ENCODE measurements at regions of chr5 and their contacts with region 1.

Region 1: DNA sequence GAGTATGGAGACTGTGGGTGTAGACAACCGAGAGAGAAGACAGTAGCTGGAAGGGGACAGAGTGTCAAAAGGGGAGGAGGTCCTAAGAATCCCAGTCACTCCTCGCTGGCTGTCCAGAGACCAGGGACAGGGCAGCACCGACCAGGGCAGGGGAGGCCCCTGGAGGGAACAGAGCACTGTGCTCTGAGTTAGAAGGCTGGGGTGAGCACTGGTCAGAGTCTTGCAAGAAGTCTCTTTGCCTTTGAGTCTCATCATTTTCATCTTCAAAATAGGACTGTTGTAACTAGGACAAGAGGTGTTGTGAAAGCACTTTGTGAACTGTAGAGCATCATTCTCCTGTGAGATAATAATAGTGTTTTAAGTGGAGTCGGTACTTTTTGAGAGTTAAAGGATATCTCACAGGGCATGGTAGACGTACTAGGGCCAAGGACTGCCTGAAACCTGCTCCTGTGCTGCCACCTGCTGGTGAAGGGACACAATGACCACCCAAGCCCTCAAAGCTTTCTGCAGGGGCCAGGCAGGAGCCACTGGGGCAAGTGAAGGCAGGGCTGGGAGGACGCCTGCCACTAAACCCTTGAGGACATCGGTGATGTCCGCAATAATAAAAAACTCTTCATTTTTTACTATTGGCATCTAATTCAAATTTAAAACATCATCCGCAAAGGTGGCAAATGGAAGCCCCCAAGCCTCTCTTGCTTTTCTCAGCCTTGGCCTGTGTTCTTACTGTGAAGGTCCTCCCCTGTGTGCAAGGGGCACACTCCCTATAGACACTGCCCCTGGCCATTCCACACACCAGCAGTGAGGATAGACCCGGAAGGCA is 28.2 kb downstream of the SLC6A7 start:
- DNase-seq: peak; percentile 68 to 91 (median 83)
- ATAC-seq: peak; percentile 97
- H3K4me3 ChIP-seq: no peak overlapping the region
- H3K4me3 Mint-ChIP-seq: no peak overlapping the region
- H3K27ac ChIP-seq: no peak overlapping the region
- H3K27ac Mint-ChIP-seq: no peak overlapping the region
- H3K4me1 ChIP-seq: no peaks in the 10 kb centered on the region
- H3K4me1 Mint-ChIP-seq: peaks cover 2% of the 10 kb centered on the region
- H3K27me3 ChIP-seq: no peaks in the 10 kb centered on the region
- H3K27me3 Mint-ChIP-seq: peaks cover 3% of the 10 kb centered on the region
- CTCF ChIP-seq: peak; percentile 82

Region 2: GRCh38 chr5:149834246-149834855 is 383.7 kb before region 1 on chr5:
- CTCF ChIA-PET with region 1: interaction called, 6 read pairs
- POLR2A ChIA-PET with region 1: no interaction called
- intact Hi-C with region 1: loop called in 1 of 2 experiments (anchors 2 kb)
- DNase-seq: peak in 8 of 9 experiments; percentile 20 to 75 (median 45)
- ATAC-seq: peak; percentile 62
- H3K4me3 ChIP-seq: no peak overlapping the region
- H3K4me3 Mint-ChIP-seq: no peak overlapping the region
- H3K27ac ChIP-seq: no peak overlapping the region
- H3K27ac Mint-ChIP-seq: no peak overlapping the region
- H3K4me1 ChIP-seq: no peaks in the 10 kb centered on the region
- H3K4me1 Mint-ChIP-seq: no peaks in the 10 kb centered on the region
- H3K27me3 ChIP-seq: no peaks in the 10 kb centered on the region
- H3K27me3 Mint-ChIP-seq: no peaks in the 10 kb centered on the region
- CTCF ChIP-seq: peak; percentile 52

Region 3: GRCh38 chr5:150161242-150162141 is 56.6 kb before region 1 on chr5:
- CTCF ChIA-PET with region 1: interaction called, 122 read pairs
- POLR2A ChIA-PET with region 1: no interaction called
- intact Hi-C with region 1: loop called in 1 of 2 experiments (anchors 1 kb)
- DNase-seq: peak; percentile 63 to 86 (median 71)
- ATAC-seq: peak; percentile 94
- H3K4me3 ChIP-seq: no peak overlapping the region
- H3K4me3 Mint-ChIP-seq: no peak overlapping the region
- H3K27ac ChIP-seq: no peak overlapping the region
- H3K27ac Mint-ChIP-seq: no peak overlapping the region
- H3K4me1 ChIP-seq: no peaks in the 10 kb centered on the region
- H3K4me1 Mint-ChIP-seq: no peaks in the 10 kb centered on the region
- H3K27me3 ChIP-seq: peaks cover 0 to 3% of the 10 kb centered on the region in 2 experiments
- H3K27me3 Mint-ChIP-seq: peaks cover 17% of the 10 kb centered on the region
- CTCF ChIP-seq: peak; percentile 85

Region 4: GRCh38 chr5:150234576-150235499 is 16.8 kb after region 1 on chr5:
- CTCF ChIA-PET with region 1: interaction called, 10 read pairs
- POLR2A ChIA-PET with region 1: no interaction called
- intact Hi-C with region 1: no loop called
- DNase-seq: no peak
- ATAC-seq: no peak
- H3K4me3 ChIP-seq: no peak overlapping the region
- H3K4me3 Mint-ChIP-seq: no peak overlapping the region
- H3K27ac ChIP-seq: no peak overlapping the region
- H3K27ac Mint-ChIP-seq: no peak overlapping the region
- H3K4me1 ChIP-seq: no peaks in the 10 kb centered on the region
- H3K4me1 Mint-ChIP-seq: no peaks in the 10 kb centered on the region
- H3K27me3 ChIP-seq: no peaks in the 10 kb centered on the region
- H3K27me3 Mint-ChIP-seq: no peaks in the 10 kb centered on the region
- CTCF ChIP-seq: no peak

Measured in CD8-positive, alpha-beta T cell (primary cell).